ENCODE measurements at regions of chr12 and their contacts with region 1.

Region 1: DNA sequence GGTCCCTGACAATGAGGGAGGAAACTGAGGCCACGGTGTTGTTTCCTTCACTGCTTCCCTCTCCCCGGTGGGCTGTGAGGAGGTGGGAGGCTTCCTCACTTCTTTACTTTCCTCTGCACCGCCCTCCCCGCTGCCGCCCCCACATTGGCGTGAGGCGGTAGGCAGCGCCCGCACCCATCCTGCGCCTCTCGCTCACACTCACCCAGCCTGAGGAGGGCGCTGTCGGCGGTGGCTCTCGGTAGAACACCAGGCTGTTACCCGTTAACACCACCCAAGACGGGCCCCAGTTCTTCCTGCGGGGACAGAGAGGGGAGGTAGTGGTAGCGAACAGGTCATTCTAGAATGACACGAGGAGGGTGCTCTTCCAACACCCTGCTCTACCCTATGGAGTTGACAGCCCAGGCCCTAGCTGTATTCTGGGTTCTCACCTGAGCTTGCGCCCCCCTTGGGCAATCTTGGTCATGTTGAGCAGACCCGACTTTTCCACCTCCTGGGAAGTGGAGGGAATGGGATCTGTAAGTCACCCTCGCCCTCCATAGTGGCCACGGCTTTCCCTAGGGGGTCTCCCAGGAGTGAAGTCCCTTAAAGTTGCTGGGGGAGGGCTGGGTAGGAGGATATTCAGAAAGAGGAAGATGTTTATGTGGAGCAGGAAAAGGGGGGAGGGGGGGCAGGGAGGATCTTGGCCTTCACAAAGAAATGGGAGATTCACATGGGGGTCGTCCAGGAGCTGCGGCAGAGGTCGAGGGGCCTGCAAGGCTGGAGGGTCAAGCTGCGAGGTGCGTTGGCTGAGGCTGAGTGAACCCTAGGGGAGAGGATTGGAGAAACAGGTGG is 3.3 kb downstream of the ARHGAP9 start:
- DNase-seq: peak; percentile 94
- H3K4me3 Mint-ChIP-seq: peak overlapping the region; percentile 84
- H3K27ac Mint-ChIP-seq: peak overlapping the region; percentile 99
- H3K4me1 Mint-ChIP-seq: peaks cover 65% of the 10 kb centered on the region
- H3K27me3 Mint-ChIP-seq: no peaks in the 10 kb centered on the region

Region 2: DNA sequence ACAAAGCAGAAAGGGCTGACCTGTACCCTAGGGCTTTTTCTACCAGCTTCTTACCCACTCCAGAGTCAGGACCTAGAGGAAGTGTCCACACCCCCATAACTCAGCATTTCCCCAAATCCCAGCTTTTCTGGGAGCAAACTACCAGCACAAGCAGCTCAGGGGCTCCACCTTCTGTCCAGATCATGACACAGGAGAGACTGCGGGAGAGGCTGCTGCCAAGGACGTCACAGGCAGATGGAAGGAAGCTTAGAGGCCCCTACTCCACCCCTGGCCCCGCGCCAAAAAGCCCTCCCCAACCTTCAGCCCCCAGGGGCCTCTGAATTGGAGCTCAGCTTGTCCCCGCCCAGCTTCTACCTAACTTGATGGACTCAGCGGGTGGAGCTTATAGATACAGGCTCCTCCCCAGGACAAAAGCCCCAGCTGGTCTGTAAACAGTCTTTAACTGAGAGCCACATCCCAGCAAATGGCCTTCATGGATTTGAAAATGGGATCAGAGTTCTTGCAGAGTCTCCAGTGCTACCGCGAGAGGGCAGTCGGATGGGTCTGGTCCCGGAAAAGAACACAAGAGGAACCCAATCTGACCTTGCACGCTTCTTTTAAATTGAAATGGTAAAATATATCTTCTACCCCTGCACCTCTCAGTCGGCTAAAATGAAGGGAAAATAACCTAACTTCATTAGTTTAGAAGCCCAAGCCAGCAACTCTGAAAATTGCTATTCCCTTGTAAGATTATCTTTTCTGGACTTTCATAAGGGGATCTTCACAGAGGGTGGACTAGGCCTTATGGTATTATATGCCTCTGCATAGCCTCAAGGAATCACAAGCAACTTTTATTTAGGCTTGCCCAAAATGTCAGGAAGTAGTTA is 839.5 kb before region 1 on chr12:
- CTCF ChIA-PET with region 1: no interaction called
- intact Hi-C with region 1: loop called (anchors 5 kb)
- DNase-seq: peak; percentile 97
- H3K4me3 Mint-ChIP-seq: peak overlapping the region; percentile 86
- H3K27ac Mint-ChIP-seq: peak overlapping the region; percentile 91
- H3K4me1 Mint-ChIP-seq: peaks cover 62% of the 10 kb centered on the region
- H3K27me3 Mint-ChIP-seq: no peaks in the 10 kb centered on the region

Region 3: DNA sequence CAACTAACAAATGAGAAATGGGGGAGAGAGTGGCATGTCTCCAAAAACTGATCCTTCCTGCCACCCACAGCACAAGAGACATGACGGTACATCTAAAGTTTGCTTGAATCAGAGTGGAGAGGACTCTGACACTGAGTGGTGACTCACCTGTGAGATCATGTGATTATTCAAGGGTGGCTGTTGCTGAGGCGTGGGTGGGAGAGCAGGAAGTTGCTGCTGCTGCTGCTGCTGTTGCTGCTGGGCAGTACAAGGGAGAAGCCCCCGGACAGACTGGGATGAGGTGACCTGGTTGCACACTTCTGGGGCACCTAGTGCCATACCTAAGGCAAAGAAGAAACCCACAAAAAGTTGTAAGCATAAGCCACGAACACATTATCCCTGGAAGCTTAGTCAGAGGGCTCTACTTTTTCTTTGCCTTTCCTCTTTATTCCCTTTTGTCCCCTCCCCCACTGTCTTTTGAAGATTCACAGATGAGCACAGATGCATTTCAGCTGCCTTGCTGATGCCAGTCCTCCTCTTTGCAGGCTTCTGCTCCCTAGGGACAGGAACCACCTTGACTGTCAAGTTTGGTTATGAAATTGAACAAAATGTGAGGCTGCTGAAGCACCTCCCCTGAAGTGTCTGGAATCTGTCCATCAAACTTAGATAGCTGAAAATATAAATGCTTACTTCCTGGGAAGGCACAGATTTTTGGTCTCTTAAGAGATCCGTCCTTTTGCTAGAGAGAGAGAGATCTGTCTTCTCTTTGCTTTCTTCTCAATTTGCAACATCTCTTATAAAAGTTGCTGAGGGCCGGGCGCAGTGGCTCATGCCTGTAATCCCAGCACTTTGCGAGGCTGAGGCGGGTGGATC is 195.9 kb before region 1 on chr12:
- CTCF ChIA-PET with region 1: no interaction called
- intact Hi-C with region 1: loop called (anchors 1 kb)
- DNase-seq: peak; percentile 90
- H3K4me3 Mint-ChIP-seq: peak overlapping the region; percentile 46
- H3K27ac Mint-ChIP-seq: peak overlapping the region; percentile 90
- H3K4me1 Mint-ChIP-seq: peaks cover 28% of the 10 kb centered on the region
- H3K27me3 Mint-ChIP-seq: no peaks in the 10 kb centered on the region

Region 4: GRCh38 chr12:57452937-57453509 is 23.4 kb before region 1 on chr12:
- CTCF ChIA-PET with region 1: interaction called, 207 read pairs
- intact Hi-C with region 1: no loop called
- DNase-seq: peak; percentile 82
- H3K4me3 Mint-ChIP-seq: no peak overlapping the region
- H3K27ac Mint-ChIP-seq: peak overlapping the region; percentile 19
- H3K4me1 Mint-ChIP-seq: peaks cover 17% of the 10 kb centered on the region
- H3K27me3 Mint-ChIP-seq: no peaks in the 10 kb centered on the region

Region 5: DNA sequence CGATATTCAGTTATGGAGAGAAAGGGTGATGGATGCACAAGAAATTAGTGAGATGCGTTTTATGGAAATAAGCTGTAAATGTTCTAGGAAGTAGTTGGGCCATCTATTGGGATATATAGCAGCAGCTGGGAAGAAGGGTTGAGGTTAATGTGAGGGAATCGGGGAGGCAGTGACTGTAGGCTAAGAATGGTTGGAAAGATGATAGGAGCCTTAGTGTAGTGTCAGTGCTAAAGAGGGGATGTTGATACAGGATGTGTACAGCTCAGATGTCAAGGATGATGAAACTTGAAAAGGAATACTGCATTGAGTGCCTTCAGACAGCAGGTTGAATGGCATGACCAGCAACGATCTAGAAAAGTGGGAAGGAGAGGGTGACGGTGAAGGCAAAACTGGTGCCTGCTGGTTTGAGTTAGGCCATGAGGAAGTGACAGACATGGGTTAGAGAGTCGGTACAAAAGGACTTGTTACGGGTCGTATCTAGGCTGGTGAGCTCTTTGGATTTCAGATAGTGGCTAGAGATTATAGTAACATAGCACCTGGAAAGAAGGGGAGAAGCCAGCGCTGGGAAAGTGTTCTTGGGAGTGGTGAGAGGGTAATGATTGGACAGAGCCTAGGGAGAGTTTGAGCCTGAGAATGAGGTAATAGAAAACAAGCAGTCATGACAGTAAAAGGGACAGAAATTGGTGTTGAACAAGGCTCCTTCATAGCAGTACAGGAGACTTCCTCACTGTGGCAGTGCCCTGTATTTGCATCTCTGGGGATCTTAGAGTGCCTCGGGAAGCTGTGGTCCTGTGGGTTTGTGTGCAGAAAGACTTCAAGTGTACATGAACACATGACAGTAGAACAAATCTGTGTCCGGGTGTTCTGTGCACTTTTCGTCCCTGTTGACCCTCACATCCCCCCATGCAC is 21.1 kb after region 1 on chr12:
- CTCF ChIA-PET with region 1: no interaction called
- intact Hi-C with region 1: no loop called
- DNase-seq: no peak
- H3K4me3 Mint-ChIP-seq: no peak overlapping the region
- H3K27ac Mint-ChIP-seq: peak overlapping the region; percentile 6
- H3K4me1 Mint-ChIP-seq: peaks cover 13% of the 10 kb centered on the region
- H3K27me3 Mint-ChIP-seq: no peaks in the 10 kb centered on the region

Region 6: DNA sequence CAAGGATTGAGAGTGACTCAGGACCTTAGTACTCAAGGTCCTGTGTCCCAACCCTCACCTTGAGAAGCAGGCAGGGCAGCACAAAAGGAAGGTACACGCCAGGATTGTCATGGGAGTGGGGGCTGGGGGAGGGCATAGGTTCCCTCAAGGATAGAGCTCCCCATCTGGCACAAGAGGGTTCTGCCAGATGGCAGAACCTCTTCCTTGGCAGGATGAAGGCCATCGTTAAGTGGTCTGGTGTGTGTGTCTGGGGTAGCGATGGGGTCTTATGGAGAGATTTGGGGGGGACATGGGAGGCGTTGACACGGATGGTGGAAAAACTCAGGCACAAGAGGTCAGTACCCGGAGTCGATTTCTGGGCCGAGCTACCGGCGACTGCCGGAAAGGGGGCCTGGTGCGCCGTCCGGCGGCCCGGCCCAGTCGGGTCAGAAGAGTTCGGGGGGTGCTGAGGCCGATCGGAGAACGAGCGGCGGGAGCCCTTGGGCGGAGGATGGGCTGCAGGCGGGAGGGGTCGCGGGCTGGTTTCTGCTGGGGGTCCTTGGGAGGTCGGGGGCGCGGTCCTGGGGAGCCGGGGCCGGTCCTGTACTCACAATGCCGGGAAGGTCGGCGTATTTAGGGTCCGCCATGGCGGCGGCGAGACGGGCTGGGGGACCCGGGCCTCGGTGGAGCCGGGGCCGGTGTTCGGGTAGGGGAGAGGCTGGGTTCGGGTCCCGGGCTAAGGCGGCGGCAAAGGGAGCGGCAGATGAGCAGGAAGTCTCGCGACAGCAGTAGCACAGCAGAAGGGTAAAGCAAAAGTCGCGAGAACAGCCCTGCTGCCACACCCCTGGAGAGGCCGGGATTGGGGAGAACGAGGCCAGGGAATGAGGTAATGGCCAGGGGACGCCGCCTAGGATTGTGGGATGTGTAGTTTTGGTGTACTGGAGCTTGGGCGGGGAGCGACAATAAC is 70.3 kb after region 1 on chr12 and contains the start of gene DCTN2:
- CTCF ChIA-PET with region 1: no interaction called
- intact Hi-C with region 1: loop called (anchors 1 kb)
- DNase-seq: peak; percentile 98
- H3K4me3 Mint-ChIP-seq: peak within 1 kb of the TSS; percentile 91
- H3K27ac Mint-ChIP-seq: peak within 1 kb of the TSS; percentile 82
- H3K4me1 Mint-ChIP-seq: peaks cover 47% of the 10 kb centered on the region
- H3K27me3 Mint-ChIP-seq: no peaks in the 10 kb centered on the region
- total RNA-seq, gene DCTN2: 65.1 to 71.7 TPM

Region 7: GRCh38 chr12:57576613-57577160 is 100.3 kb after region 1 on chr12:
- CTCF ChIA-PET with region 1: no interaction called
- intact Hi-C with region 1: no loop called
- DNase-seq: no peak
- H3K4me3 Mint-ChIP-seq: no peak overlapping the region
- H3K27ac Mint-ChIP-seq: no peak overlapping the region
- H3K4me1 Mint-ChIP-seq: no peaks in the 10 kb centered on the region
- H3K27me3 Mint-ChIP-seq: no peaks in the 10 kb centered on the region

Region 8: GRCh38 chr12:57693659-57694458 is 217.5 kb after region 1 on chr12 and contains the start of gene OS9:
- CTCF ChIA-PET with region 1: no interaction called
- intact Hi-C with region 1: loop called (anchors 1 kb)
- DNase-seq: peak; percentile 99
- H3K4me3 Mint-ChIP-seq: no peak within 1 kb of the TSS
- H3K27ac Mint-ChIP-seq: no peak within 1 kb of the TSS
- H3K4me1 Mint-ChIP-seq: peaks cover 3% of the 10 kb centered on the region
- H3K27me3 Mint-ChIP-seq: no peaks in the 10 kb centered on the region
- total RNA-seq, gene OS9: 60.7 to 60.9 TPM

Region 9: DNA sequence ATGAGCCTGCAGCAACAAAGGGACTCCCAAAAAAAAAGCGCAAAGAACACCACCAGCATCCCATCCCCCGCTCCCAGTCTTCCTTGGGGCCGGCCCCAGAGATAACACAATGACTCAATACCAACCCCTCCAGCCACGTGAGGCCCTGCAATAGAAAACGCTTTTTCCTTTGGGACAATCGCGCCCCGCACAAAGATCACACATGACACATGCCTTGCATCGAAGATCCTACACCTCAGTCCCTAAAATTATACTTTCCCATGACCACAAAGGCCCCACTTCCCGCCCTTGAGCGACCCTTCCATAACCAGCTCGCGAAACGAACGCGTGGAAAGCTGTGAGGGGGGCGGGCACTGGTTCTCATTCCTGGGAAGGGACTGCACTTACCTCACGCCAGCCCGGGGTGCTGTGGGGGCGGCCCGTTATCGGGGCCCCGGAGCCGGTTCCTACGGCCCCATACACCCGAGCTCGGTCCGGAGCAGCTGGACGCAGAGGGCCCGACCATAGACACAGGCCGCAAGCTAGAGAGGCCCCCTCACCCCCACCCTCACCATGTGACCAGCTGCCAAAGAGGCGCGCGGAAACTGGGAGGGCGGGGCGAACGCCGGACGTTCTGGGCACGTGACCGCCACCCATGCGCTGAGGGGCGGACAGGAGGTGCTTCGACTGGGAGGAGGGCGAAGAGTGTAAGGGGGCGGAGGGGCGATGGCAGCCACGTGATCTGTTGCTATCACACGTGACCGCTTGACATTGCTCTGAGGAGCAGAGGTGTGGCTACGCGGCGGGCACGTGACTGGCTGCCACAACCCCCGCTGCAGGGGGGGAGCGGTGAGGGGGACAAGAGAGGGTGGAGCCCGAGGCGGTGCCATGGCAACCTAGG is 275.7 kb after region 1 on chr12 and contains the start of gene CDK4:
- CTCF ChIA-PET with region 1: no interaction called
- intact Hi-C with region 1: loop called (anchors 1 kb)
- DNase-seq: peak; percentile 99
- H3K4me3 Mint-ChIP-seq: peak within 1 kb of the TSS; percentile 100
- H3K27ac Mint-ChIP-seq: peak within 1 kb of the TSS; percentile 99
- H3K4me1 Mint-ChIP-seq: peaks cover 51% of the 10 kb centered on the region
- H3K27me3 Mint-ChIP-seq: no peaks in the 10 kb centered on the region
- total RNA-seq, gene CDK4: 194 to 202 TPM